AG04449 (cell line): ENCODE measurements at regions of chr10 and their contacts with region 1.

Region 1: GRCh38 chr10:83871187-83872081 is 267.9 kb upstream of the GHITM start:
- DNase-seq: no peak
- H3K4me3 ChIP-seq: no peak overlapping the region
- CTCF ChIP-seq: peak; percentile 82

Region 2: DNA sequence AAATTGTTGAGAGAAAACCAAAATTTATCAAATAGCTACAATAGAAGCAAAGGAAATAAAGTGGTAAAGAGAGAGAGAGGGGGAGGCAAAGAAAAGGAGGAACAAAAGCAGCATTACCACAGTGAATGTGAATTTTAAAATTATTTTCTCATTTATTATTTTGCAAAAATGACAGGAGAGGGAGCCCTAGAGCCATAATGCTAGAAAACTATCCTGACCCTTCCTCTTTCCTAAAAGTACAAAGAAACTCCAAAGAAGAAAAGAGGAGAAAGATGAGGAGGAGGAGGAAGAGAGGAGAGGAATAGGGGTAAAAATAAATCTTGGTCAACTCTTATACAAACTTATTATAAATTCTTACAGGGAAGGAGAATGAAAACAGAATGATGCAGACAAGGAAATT is 1074.9 kb before region 1 on chr10:
- CTCF ChIA-PET with region 1: interaction called, 12 read pairs
- POLR2A ChIA-PET with region 1: no interaction called
- DNase-seq: no peak
- H3K4me3 ChIP-seq: no peak overlapping the region
- CTCF ChIP-seq: no peak

Region 3: GRCh38 chr10:83476211-83476610 is 395.2 kb before region 1 on chr10:
- CTCF ChIA-PET with region 1: no interaction called
- POLR2A ChIA-PET with region 1: no interaction called
- DNase-seq: no peak
- H3K4me3 ChIP-seq: no peak overlapping the region
- CTCF ChIP-seq: no peak

Region 4: GRCh38 chr10:83881661-83882060 is 10.2 kb after region 1 on chr10:
- CTCF ChIA-PET with region 1: interaction called, 12 read pairs
- POLR2A ChIA-PET with region 1: no interaction called
- DNase-seq: no peak
- H3K4me3 ChIP-seq: no peak overlapping the region
- CTCF ChIP-seq: no peak